ENCODE measurements at regions of chr13 and their contacts with region 1.

Region 1: GRCh38 chr13:41061075-41061913 is at the start of gene WBP4:
- DNase-seq: peak; percentile 81 to 94 (median 90)
- ATAC-seq: peak; percentile 78
- H3K4me3 ChIP-seq: peak within 1 kb of the TSS; percentile 74
- H3K4me3 Mint-ChIP-seq: peak within 1 kb of the TSS; percentile 97 to 100 (median 99)
- H3K27ac ChIP-seq: peak within 1 kb of the TSS; percentile 77
- H3K27ac Mint-ChIP-seq: peak within 1 kb of the TSS; percentile 95 to 100 (median 100)
- H3K4me1 ChIP-seq: peaks cover 0 to 5% of the 10 kb centered on the region in 2 donors
- H3K4me1 Mint-ChIP-seq: peaks cover 33 to 82% (median 59%) of the 10 kb centered on the region in 7 donors
- H3K27me3 ChIP-seq: no peaks in the 10 kb centered on the region
- H3K27me3 Mint-ChIP-seq: peaks cover 0 to 10% (median 0%) of the 10 kb centered on the region in 5 donors
- total RNA-seq, gene WBP4: 6.5 to 9.8 (median 8.6) TPM

Region 2: DNA sequence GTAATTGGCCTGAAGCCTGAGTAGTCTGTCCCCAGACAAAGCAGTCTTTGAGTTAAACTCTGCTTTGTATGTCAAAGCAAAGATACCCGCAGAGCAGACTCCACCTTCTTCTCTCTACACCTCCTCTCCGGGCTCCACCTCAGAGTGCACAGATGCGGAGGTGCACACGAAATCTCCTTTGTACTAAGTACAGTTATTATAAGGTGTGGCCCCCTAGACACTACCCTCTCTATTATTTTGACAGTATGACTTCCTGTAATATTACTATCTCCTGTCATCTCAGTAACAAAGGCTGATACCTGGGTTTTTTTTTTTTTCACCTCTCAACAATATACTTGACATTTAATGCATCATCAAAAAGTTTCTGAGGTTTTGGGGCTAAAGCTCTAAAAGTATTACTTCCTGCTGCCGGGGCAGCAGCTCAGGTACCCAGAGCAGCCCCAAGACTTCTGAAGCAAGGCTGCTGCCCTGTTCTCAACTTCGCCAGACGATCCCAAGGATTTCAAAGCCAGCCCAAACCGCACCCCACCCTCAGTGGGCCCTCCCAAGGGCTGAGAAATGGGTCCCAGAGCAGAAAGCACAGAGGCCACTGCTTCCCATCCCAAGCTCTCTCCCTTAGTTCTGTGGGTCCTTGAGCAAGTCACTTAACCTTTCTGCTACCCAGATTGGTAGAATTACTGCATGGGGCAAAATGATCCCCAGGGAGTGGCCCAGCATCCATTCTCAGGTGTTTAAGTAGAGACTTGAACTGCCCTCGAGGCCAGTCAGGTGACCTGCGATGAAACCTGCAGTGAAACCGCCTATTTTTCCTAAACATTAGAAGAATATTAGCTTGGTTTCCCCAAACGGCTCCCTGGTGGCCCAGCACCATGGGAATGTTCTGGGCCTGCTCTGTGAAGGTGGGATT is 575.4 kb before region 1 on chr13:
- CTCF ChIA-PET with region 1: no interaction called
- POLR2A ChIA-PET with region 1: no interaction called
- intact Hi-C with region 1: loop called in 1 of 2 experiments (anchors 2 kb)
- DNase-seq: peak; percentile 29 to 93 (median 88)
- ATAC-seq: peak; percentile 97
- H3K4me3 ChIP-seq: peak overlapping the region; percentile 28
- H3K4me3 Mint-ChIP-seq: peak overlapping the region; percentile 67 to 88 (median 78)
- H3K27ac ChIP-seq: peak overlapping the region; percentile 71
- H3K27ac Mint-ChIP-seq: peak overlapping the region; percentile 91 to 100 (median 96)
- H3K4me1 ChIP-seq: peaks cover 45 to 89% of the 10 kb centered on the region in 2 donors
- H3K4me1 Mint-ChIP-seq: peaks cover 61 to 99% (median 90%) of the 10 kb centered on the region in 7 donors
- H3K27me3 ChIP-seq: no peaks in the 10 kb centered on the region
- H3K27me3 Mint-ChIP-seq: no peaks in the 10 kb centered on the region

Region 3: GRCh38 chr13:40624383-40624782 is 436.9 kb before region 1 on chr13:
- CTCF ChIA-PET with region 1: no interaction called
- POLR2A ChIA-PET with region 1: no interaction called
- intact Hi-C with region 1: no loop called
- DNase-seq: peak in 1 of 9 donors; percentile 52
- ATAC-seq: peak; percentile 43
- H3K4me3 ChIP-seq: no peak overlapping the region
- H3K4me3 Mint-ChIP-seq: peak overlapping the region in 9 of 10 donors; percentile 39 to 74 (median 53)
- H3K27ac ChIP-seq: peak overlapping the region; percentile 37
- H3K27ac Mint-ChIP-seq: peak overlapping the region in 8 of 9 donors; percentile 33 to 88 (median 64)
- H3K4me1 ChIP-seq: peaks cover 25 to 61% of the 10 kb centered on the region in 2 donors
- H3K4me1 Mint-ChIP-seq: peaks cover 59 to 100% (median 92%) of the 10 kb centered on the region in 7 donors
- H3K27me3 ChIP-seq: no peaks in the 10 kb centered on the region
- H3K27me3 Mint-ChIP-seq: no peaks in the 10 kb centered on the region

Region 4: GRCh38 chr13:40922437-40923040 is 138.8 kb before region 1 on chr13:
- CTCF ChIA-PET with region 1: no interaction called
- POLR2A ChIA-PET with region 1: interaction called, 17 read pairs
- intact Hi-C with region 1: loop called (anchors 1 kb)
- DNase-seq: no peak
- ATAC-seq: no peak
- H3K4me3 ChIP-seq: no peak overlapping the region
- H3K4me3 Mint-ChIP-seq: peak overlapping the region in 9 of 10 donors; percentile 53 to 100 (median 72)
- H3K27ac ChIP-seq: no peak overlapping the region
- H3K27ac Mint-ChIP-seq: peak overlapping the region; percentile 54 to 96 (median 91)
- H3K4me1 ChIP-seq: peaks cover 0 to 8% of the 10 kb centered on the region in 2 donors
- H3K4me1 Mint-ChIP-seq: peaks cover 11 to 33% (median 23%) of the 10 kb centered on the region in 7 donors
- H3K27me3 ChIP-seq: no peaks in the 10 kb centered on the region
- H3K27me3 Mint-ChIP-seq: no peaks in the 10 kb centered on the region

Region 5: GRCh38 chr13:41004875-41005693 is 56.2 kb before region 1 on chr13:
- CTCF ChIA-PET with region 1: no interaction called
- POLR2A ChIA-PET with region 1: interaction called, 11 read pairs
- intact Hi-C with region 1: loop called in 1 of 2 experiments (anchors 2 kb)
- DNase-seq: peak in 7 of 9 donors; percentile 52 to 74 (median 65)
- ATAC-seq: peak; percentile 90
- H3K4me3 ChIP-seq: peak overlapping the region; percentile 6
- H3K4me3 Mint-ChIP-seq: peak overlapping the region; percentile 4 to 87 (median 69)
- H3K27ac ChIP-seq: peak overlapping the region; percentile 67
- H3K27ac Mint-ChIP-seq: peak overlapping the region; percentile 58 to 89 (median 88)
- H3K4me1 ChIP-seq: peaks cover 61 to 62% of the 10 kb centered on the region in 2 donors
- H3K4me1 Mint-ChIP-seq: peaks cover 51 to 92% (median 82%) of the 10 kb centered on the region in 7 donors
- H3K27me3 ChIP-seq: no peaks in the 10 kb centered on the region
- H3K27me3 Mint-ChIP-seq: no peaks in the 10 kb centered on the region

Region 6: GRCh38 chr13:41132512-41133152 is 71.3 kb after region 1 on chr13 and contains the start of gene KBTBD6:
- CTCF ChIA-PET with region 1: no interaction called
- POLR2A ChIA-PET with region 1: no interaction called
- intact Hi-C with region 1: loop called (anchors 1 kb)
- DNase-seq: peak; percentile 76 to 93 (median 87)
- ATAC-seq: peak; percentile 98
- H3K4me3 ChIP-seq: peak within 1 kb of the TSS; percentile 77
- H3K4me3 Mint-ChIP-seq: peak within 1 kb of the TSS; percentile 94 to 99 (median 98)
- H3K27ac ChIP-seq: peak within 1 kb of the TSS; percentile 67
- H3K27ac Mint-ChIP-seq: peak within 1 kb of the TSS; percentile 91 to 97 (median 93)
- H3K4me1 ChIP-seq: peaks cover 15 to 24% of the 10 kb centered on the region in 2 donors
- H3K4me1 Mint-ChIP-seq: peaks cover 32 to 60% (median 54%) of the 10 kb centered on the region in 7 donors
- H3K27me3 ChIP-seq: no peaks in the 10 kb centered on the region
- H3K27me3 Mint-ChIP-seq: no peaks in the 10 kb centered on the region
- total RNA-seq, gene KBTBD6: 3.9 to 9.2 (median 7.7) TPM

Region 7: DNA sequence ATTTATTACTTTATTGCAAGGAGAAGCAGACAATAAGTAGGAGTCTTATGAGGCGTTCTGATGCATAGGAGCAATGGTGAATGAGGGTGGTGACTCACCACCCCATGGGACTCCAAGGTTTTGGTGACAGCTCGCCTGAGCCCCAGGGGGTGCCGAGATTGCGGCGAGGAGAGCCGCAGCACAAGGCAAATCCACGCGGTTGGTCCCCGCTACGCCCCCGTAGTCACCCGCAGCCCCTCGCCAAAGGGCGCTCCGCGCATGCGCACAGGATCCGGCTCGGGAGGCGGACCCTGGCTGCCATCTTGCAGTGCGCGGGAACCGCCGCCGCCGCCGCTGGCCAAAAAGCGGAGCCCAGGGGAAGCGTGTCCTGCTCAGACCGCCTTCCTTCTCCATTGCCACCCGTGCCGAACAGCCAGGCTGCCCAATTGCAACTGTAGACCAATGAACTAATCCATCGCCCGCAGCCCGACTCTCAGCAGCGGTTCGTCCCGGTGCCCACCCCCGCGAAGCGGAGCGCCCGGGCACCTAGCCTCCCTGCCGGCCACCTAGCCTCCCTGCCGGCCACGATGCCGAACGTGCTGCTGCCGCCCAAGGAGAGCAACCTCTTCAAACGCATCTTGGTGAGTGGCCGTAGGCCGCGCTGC is 249.8 kb after region 1 on chr13 and contains the start of gene NAA16:
- CTCF ChIA-PET with region 1: no interaction called
- POLR2A ChIA-PET with region 1: no interaction called
- intact Hi-C with region 1: loop called (anchors 1 to 2 kb)
- DNase-seq: peak; percentile 91 to 99 (median 94)
- ATAC-seq: peak; percentile 91
- H3K4me3 ChIP-seq: peak within 1 kb of the TSS; percentile 97
- H3K4me3 Mint-ChIP-seq: peak within 1 kb of the TSS; percentile 80 to 99 (median 98)
- H3K27ac ChIP-seq: peak within 1 kb of the TSS; percentile 91
- H3K27ac Mint-ChIP-seq: peak within 1 kb of the TSS; percentile 76 to 96 (median 95)
- H3K4me1 ChIP-seq: peaks cover 25 to 29% of the 10 kb centered on the region in 2 donors
- H3K4me1 Mint-ChIP-seq: peaks cover 14 to 55% (median 41%) of the 10 kb centered on the region in 7 donors
- H3K27me3 ChIP-seq: no peaks in the 10 kb centered on the region
- H3K27me3 Mint-ChIP-seq: no peaks in the 10 kb centered on the region
- total RNA-seq, gene NAA16: 30.6 to 99.6 (median 90.4) TPM

Region 8: DNA sequence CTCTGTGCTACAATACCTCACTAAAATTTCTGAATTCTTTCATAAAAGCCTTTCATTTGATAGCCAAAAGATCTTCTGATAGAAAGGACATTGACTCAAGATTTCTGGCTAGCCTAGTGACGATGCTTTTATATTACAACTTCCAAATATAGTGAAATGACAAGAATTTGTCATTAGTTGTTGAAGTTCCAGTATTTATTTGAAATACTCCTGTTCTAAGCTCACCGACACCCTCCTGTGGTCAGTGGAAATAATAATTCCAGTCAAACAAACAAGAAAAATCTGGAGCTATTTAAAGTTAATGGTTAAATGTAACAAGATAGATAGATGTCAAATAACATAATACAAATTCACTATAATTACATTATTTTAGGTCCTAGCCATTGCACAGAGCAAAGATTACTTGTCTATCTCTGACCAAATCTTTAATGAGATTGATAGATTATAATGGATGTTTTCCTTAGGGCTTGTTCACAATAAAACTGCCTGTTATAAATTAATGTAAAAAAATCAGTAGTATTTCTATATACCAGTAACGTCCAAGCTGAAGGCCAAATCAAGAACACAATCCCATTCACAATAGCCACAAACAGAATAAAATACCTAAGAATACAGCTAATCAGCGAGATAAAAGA is 591.5 kb after region 1 on chr13:
- CTCF ChIA-PET with region 1: no interaction called
- POLR2A ChIA-PET with region 1: no interaction called
- intact Hi-C with region 1: loop called in 1 of 2 experiments (anchors 5 kb)
- DNase-seq: peak in 7 of 9 donors; percentile 19 to 60 (median 50)
- ATAC-seq: peak; percentile 54
- H3K4me3 ChIP-seq: no peak overlapping the region
- H3K4me3 Mint-ChIP-seq: no peak overlapping the region
- H3K27ac ChIP-seq: no peak overlapping the region
- H3K27ac Mint-ChIP-seq: peak overlapping the region in 1 of 9 donors; percentile 36
- H3K4me1 ChIP-seq: peaks cover 0 to 5% of the 10 kb centered on the region in 2 donors
- H3K4me1 Mint-ChIP-seq: peaks cover 0 to 24% (median 12%) of the 10 kb centered on the region in 7 donors
- H3K27me3 ChIP-seq: no peaks in the 10 kb centered on the region
- H3K27me3 Mint-ChIP-seq: no peaks in the 10 kb centered on the region

Region 9: DNA sequence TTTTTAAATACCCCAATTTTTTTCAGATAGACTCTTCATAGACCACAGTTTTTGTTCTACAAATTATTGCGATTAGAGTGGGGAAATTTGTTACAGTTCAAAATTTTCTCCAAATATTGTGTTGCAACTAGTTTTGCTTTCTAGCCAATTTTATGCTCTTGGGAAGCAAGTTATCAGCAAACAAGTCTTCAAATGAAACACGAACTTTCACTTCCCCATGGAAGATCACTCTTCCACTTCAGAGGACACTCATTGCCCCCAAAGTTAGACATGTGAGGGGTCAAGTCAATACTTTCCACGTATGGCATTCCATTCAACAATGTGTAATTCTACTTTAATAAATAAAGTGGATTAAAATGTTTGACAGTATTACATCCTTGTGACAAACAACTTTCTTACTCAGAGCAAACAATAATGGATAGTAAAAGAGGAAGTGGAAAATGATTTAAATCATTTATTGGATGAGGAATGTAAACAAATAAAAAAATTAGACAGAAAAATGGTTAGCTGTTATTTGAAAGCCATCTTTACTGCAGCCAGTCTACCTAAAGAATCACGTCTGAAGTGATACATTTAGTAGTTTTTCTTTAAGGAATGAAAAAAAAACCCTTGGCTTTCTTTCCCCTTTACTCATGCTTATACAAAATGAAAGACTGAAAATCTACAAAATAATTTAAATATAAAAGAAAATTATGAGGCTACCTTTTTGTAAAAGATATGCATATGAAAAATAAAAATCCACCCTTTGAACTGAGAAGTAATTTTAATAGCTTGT is 1471.5 kb after region 1 on chr13:
- CTCF ChIA-PET with region 1: no interaction called
- POLR2A ChIA-PET with region 1: no interaction called
- intact Hi-C with region 1: no loop called
- DNase-seq: no peak
- ATAC-seq: no peak
- H3K4me3 ChIP-seq: no peak overlapping the region
- H3K4me3 Mint-ChIP-seq: no peak overlapping the region
- H3K27ac ChIP-seq: no peak overlapping the region
- H3K27ac Mint-ChIP-seq: no peak overlapping the region
- H3K4me1 ChIP-seq: peaks cover 0 to 4% of the 10 kb centered on the region in 2 donors
- H3K4me1 Mint-ChIP-seq: peaks cover 6 to 11% (median 9%) of the 10 kb centered on the region in 7 donors
- H3K27me3 ChIP-seq: no peaks in the 10 kb centered on the region
- H3K27me3 Mint-ChIP-seq: peaks cover 0 to 5% (median 0%) of the 10 kb centered on the region in 5 donors